ENCODE measurements at regions of chr4 and their contacts with region 1.

Region 1: DNA sequence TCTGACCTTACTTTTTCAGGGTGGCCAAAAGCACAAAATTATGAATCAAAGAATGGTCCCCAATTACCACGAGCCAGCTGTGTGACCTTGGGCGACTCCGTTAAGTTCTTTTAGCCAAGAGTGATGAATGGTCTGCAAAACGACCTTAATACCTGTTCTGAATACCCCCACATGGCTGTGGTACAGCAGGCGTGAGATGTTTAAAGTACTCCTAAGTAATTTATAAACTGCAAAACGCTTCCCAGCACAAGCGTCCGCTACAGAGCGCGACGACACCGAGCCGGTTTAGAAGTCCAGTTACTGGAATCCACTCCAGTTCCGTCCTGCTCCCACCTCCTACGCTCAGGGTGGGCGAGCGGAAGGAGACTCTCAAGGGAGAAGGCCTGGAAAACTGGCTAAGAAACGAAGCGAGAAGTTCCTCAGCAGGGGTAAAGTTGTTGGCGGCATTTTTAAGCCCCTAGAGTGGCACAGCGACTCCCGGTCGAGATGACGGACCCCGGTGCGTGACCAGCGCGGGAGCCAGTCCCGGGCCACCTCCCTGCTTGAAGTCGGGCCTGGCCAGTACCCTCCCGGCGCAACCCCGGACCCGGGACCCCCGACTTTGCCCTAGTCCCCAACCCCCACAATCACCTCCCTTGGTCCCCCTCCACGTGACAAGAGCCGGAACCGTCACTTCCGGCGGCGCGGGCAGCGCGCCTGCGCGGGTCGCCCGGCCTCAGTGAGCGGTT is 683 bp upstream of the BMP2K start:
- DNase-seq: peak; percentile 94
- ATAC-seq: peak; percentile 63
- H3K4me3 ChIP-seq: peak overlapping the region; percentile 79 to 99 (median 99)
- H3K4me3 Mint-ChIP-seq: peak overlapping the region; percentile 96
- H3K27ac ChIP-seq: peak overlapping the region; percentile 98 to 100
- H3K27ac Mint-ChIP-seq: peak overlapping the region; percentile 97
- H3K4me1 ChIP-seq: peaks cover 30 to 35% of the 10 kb centered on the region in 2 donors
- H3K4me1 Mint-ChIP-seq: peaks cover 21% of the 10 kb centered on the region
- H3K27me3 ChIP-seq: no peaks in the 10 kb centered on the region
- H3K27me3 Mint-ChIP-seq: no peaks in the 10 kb centered on the region
- CTCF ChIP-seq: no peak

Region 2: GRCh38 chr4:77819843-77820648 is 955.4 kb before region 1 on chr4:
- CTCF ChIA-PET with region 1: no interaction called
- POLR2A ChIA-PET with region 1: interaction called, 4 read pairs
- intact Hi-C with region 1: loop called (anchors 2 kb)
- DNase-seq: peak; percentile 95
- ATAC-seq: peak; percentile 75
- H3K4me3 ChIP-seq: peak overlapping the region; percentile 74 to 98 (median 88)
- H3K4me3 Mint-ChIP-seq: peak overlapping the region; percentile 98
- H3K27ac ChIP-seq: peak overlapping the region; percentile 94 to 99
- H3K27ac Mint-ChIP-seq: peak overlapping the region; percentile 99
- H3K4me1 ChIP-seq: peaks cover 42 to 45% of the 10 kb centered on the region in 2 donors
- H3K4me1 Mint-ChIP-seq: peaks cover 49% of the 10 kb centered on the region
- H3K27me3 ChIP-seq: no peaks in the 10 kb centered on the region
- H3K27me3 Mint-ChIP-seq: no peaks in the 10 kb centered on the region
- CTCF ChIP-seq: no peak

Region 3: GRCh38 chr4:78612398-78613178 is 162.9 kb before region 1 on chr4:
- CTCF ChIA-PET with region 1: interaction called, 24 read pairs
- POLR2A ChIA-PET with region 1: interaction called, 11 read pairs
- intact Hi-C with region 1: loop called (anchors 1 kb)
- DNase-seq: peak; percentile 72
- ATAC-seq: peak; percentile 40
- H3K4me3 ChIP-seq: peak overlapping the region in 1 of 5 experiments; percentile 36
- H3K4me3 Mint-ChIP-seq: peak overlapping the region; percentile 49
- H3K27ac ChIP-seq: peak overlapping the region; percentile 11 to 81
- H3K27ac Mint-ChIP-seq: peak overlapping the region; percentile 86
- H3K4me1 ChIP-seq: peaks cover 55% of the 10 kb centered on the region in 2 donors
- H3K4me1 Mint-ChIP-seq: peaks cover 60% of the 10 kb centered on the region
- H3K27me3 ChIP-seq: no peaks in the 10 kb centered on the region
- H3K27me3 Mint-ChIP-seq: no peaks in the 10 kb centered on the region
- CTCF ChIP-seq: peak; percentile 77

Region 4: DNA sequence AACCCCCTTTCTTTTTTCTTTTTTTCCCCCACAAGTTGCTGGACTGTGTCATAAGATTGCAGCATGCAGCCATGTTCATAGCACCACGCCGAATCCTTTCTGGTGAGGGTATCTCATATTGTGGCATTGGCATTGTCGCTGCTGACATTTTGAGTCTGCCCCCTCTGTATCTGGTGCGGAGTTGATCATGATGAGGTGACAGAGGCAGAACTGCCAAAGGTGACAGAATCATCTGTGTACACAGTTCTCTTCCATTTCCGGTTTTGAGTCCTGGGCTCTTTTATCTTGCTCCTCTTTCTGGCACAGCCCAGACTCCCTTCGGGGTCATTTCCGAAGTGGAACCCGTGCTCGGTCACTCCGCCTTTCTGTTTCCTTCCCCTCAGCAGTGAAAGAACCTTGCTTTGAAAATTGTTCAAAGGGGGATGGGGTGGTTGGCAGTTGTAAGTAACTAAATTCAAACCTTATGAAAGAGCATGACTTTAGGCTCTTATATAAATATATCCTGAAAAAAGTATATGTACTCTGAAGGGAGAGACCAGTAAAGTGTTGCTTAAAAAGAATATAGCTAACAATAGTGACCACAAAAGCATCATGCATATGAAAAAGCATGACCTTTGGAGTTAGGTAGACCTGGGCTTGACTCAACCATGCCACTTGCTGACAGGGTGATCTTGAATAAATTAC is 54.3 kb before region 1 on chr4:
- CTCF ChIA-PET with region 1: no interaction called
- POLR2A ChIA-PET with region 1: no interaction called
- intact Hi-C with region 1: loop called (anchors 5 kb)
- DNase-seq: peak; percentile 35
- ATAC-seq: peak; percentile 65
- H3K4me3 ChIP-seq: peak overlapping the region in 4 of 5 experiments; percentile 5 to 44 (median 38)
- H3K4me3 Mint-ChIP-seq: peak overlapping the region; percentile 81
- H3K27ac ChIP-seq: peak overlapping the region in 1 of 2 donors; percentile 50
- H3K27ac Mint-ChIP-seq: peak overlapping the region; percentile 80
- H3K4me1 ChIP-seq: peaks cover 28 to 35% of the 10 kb centered on the region in 2 donors
- H3K4me1 Mint-ChIP-seq: peaks cover 34% of the 10 kb centered on the region
- H3K27me3 ChIP-seq: no peaks in the 10 kb centered on the region
- H3K27me3 Mint-ChIP-seq: no peaks in the 10 kb centered on the region
- CTCF ChIP-seq: no peak

Region 5: DNA sequence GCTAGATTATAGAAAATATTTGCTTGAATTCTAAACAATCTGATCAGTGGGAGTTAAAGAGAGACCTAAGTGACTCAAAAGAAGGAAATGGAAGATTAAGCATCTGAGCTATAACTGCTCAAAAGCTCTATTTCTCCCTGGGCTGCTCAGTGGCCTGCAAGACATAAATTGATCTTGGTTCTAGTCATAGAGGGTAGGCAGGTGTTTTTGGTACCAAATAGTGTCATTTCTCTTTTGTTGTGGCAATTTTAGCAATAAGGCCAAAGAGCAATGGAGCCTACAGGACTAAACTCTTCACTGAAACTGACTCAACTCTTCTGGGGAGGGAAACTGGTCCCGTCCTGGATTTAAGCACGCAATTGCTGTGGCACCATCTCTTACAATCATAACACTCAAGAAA is 33.2 kb before region 1 on chr4:
- CTCF ChIA-PET with region 1: no interaction called
- POLR2A ChIA-PET with region 1: interaction called, 11 read pairs
- intact Hi-C with region 1: loop called (anchors 5 kb)
- DNase-seq: no peak
- ATAC-seq: no peak
- H3K4me3 ChIP-seq: no peak overlapping the region
- H3K4me3 Mint-ChIP-seq: no peak overlapping the region
- H3K27ac ChIP-seq: no peak overlapping the region
- H3K27ac Mint-ChIP-seq: peak overlapping the region; percentile 37
- H3K4me1 ChIP-seq: peaks cover 13 to 23% of the 10 kb centered on the region in 2 donors
- H3K4me1 Mint-ChIP-seq: peaks cover 28% of the 10 kb centered on the region
- H3K27me3 ChIP-seq: no peaks in the 10 kb centered on the region
- H3K27me3 Mint-ChIP-seq: no peaks in the 10 kb centered on the region
- CTCF ChIP-seq: no peak

Region 6: GRCh38 chr4:78845472-78845871 is 70.0 kb after region 1 on chr4:
- CTCF ChIA-PET with region 1: interaction called, 3 read pairs
- POLR2A ChIA-PET with region 1: no interaction called
- intact Hi-C with region 1: loop called (anchors 5 kb)
- DNase-seq: peak; percentile 20
- ATAC-seq: peak; percentile 31
- H3K4me3 ChIP-seq: no peak overlapping the region
- H3K4me3 Mint-ChIP-seq: no peak overlapping the region
- H3K27ac ChIP-seq: peak overlapping the region in 1 of 2 donors; percentile 65
- H3K27ac Mint-ChIP-seq: peak overlapping the region; percentile 41
- H3K4me1 ChIP-seq: peaks cover 0 to 17% of the 10 kb centered on the region in 2 donors
- H3K4me1 Mint-ChIP-seq: peaks cover 31% of the 10 kb centered on the region
- H3K27me3 ChIP-seq: no peaks in the 10 kb centered on the region
- H3K27me3 Mint-ChIP-seq: no peaks in the 10 kb centered on the region
- CTCF ChIP-seq: no peak

Region 7: DNA sequence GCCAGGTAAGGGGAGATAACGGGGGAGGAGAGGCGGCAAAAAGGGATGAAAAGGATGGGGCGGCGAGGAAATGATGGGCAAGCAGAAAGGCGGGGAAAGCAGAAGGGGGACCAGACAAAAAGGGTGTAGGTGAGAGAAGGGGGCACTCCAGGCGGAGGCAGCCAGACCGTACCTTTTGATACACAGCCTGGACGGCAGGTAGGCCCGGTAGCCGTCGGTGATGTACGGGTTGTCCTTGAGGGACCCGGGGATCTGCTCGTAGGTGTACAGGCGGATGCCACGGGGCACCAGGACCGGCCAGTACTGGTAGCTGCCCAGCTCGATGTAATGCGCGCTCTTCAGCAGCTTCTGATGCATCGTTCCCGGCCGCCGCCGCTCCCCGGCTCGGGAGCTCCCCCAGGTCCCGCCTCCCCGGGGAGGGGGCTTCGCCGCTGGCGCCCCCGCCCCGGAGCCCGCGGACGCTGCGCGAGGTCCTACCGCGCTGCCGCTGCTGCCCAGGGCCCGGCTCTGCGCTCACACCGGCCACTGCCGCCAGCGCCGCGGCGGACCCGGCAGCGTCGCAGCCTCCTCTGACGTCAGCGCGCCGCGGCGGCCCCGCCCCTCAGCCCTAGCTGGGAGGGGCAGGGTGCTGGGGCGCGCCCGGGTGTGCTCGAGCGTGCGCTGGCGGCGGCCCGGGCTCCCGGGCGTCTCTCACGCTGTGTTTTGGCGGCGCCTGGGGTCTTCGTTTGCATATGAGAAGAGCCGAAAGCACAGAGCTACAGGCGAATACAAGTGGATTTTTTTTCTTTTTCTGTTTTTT is 163.6 kb after region 1 on chr4 and contains the start of gene PAQR3:
- CTCF ChIA-PET with region 1: no interaction called
- POLR2A ChIA-PET with region 1: no interaction called
- intact Hi-C with region 1: loop called (anchors 5 kb)
- DNase-seq: peak; percentile 91
- ATAC-seq: peak; percentile 98
- H3K4me3 ChIP-seq: peak within 1 kb of the TSS; percentile 74 to 88 (median 85)
- H3K4me3 Mint-ChIP-seq: peak within 1 kb of the TSS; percentile 91
- H3K27ac ChIP-seq: peak within 1 kb of the TSS; percentile 45 to 75
- H3K27ac Mint-ChIP-seq: peak within 1 kb of the TSS; percentile 79
- H3K4me1 ChIP-seq: peaks cover 12 to 20% of the 10 kb centered on the region in 2 donors
- H3K4me1 Mint-ChIP-seq: peaks cover 26% of the 10 kb centered on the region
- H3K27me3 ChIP-seq: no peaks in the 10 kb centered on the region
- H3K27me3 Mint-ChIP-seq: peaks cover 3% of the 10 kb centered on the region
- CTCF ChIP-seq: no peak
- total RNA-seq, gene PAQR3: 12.6 and 13.5 TPM in 2 replicates